HCT116 (cell line): ENCODE measurements at regions of chr2 and their contacts with region 1.

Region 1: DNA sequence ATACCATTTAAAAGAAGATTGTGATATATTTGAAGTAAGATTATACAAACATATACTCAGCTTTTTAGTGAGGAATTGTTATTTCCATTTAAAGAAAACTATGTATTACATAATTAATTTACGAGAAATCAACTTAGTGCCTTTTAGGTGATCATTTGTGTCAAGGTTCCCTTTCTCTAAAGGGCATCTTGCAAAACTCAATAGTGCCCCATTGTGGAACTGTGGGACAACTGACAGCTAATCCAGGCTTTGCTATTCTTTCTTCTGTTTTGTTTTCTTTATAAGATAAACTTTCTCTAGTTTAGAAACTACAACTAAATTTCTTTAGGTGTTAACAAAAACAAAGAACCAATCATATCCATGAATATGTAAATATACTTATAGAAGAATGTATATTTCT is 24.3 kb upstream of the VIT start:
- DNase-seq: peak; percentile 32
- ATAC-seq: peak; percentile 74
- H3K4me3 ChIP-seq: no peak overlapping the region
- H3K27ac ChIP-seq: no peak overlapping the region
- H3K4me1 ChIP-seq: no peaks in the 10 kb centered on the region
- H3K27me3 ChIP-seq: no peaks in the 10 kb centered on the region
- CTCF ChIP-seq: peak; percentile 41 to 68 (median 65); a peak in 4 of 6 replicates
- POLR2A ChIP-seq: no peak
- RAD21 ChIP-seq: peak; percentile 72

Region 2: GRCh38 chr2:35891936-35892335 is 780.3 kb before region 1 on chr2:
- CTCF ChIA-PET with region 1: no interaction called
- POLR2A ChIA-PET with region 1: no interaction called
- RAD21 ChIA-PET with region 1: no interaction called
- intact Hi-C with region 1: loop called (anchors 10 kb)
- DNase-seq: no peak
- ATAC-seq: no peak
- H3K4me3 ChIP-seq: no peak overlapping the region
- H3K27ac ChIP-seq: no peak overlapping the region
- H3K4me1 ChIP-seq: no peaks in the 10 kb centered on the region
- H3K27me3 ChIP-seq: no peaks in the 10 kb centered on the region
- CTCF ChIP-seq: no peak
- POLR2A ChIP-seq: no peak
- RAD21 ChIP-seq: no peak

Region 3: DNA sequence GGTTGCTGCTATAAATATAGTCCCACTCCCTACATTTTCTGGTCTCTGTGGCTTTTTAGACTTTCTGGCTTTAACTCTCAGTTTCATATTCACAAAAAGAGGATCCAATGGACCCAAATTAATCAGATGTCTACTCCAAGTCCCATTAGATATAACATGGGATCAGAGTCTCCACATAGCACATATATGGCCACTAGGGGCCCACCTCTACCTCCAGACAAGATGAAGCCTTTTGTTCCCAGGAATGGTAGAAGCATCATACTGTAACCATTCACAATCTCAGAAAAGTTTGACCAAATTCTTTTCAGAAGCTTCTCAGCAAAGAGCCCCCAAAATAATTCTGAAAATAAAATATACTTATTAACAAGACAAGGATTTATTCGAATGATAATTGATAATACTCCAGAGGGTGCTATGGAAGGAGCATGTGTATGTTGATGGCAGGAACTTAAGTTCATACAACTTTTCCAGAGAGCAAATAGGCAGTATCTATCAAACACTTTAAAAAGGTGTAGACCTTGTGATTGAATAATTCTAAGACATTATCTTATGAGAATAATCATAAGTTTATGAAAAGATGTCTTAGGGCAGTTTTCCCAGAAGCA is 699.0 kb before region 1 on chr2:
- CTCF ChIA-PET with region 1: no interaction called
- POLR2A ChIA-PET with region 1: no interaction called
- RAD21 ChIA-PET with region 1: no interaction called
- intact Hi-C with region 1: loop called (anchors 10 kb)
- DNase-seq: no peak
- ATAC-seq: peak; percentile 81
- H3K4me3 ChIP-seq: no peak overlapping the region
- H3K27ac ChIP-seq: no peak overlapping the region
- H3K4me1 ChIP-seq: no peaks in the 10 kb centered on the region
- H3K27me3 ChIP-seq: no peaks in the 10 kb centered on the region
- CTCF ChIP-seq: peak; percentile 28 to 70 (median 69); a peak in 5 of 6 replicates
- POLR2A ChIP-seq: no peak
- RAD21 ChIP-seq: peak; percentile 58

Region 4: GRCh38 chr2:36461039-36461681 is 211.0 kb before region 1 on chr2:
- CTCF ChIA-PET with region 1: interaction called, 3 read pairs
- POLR2A ChIA-PET with region 1: no interaction called
- RAD21 ChIA-PET with region 1: no interaction called
- intact Hi-C with region 1: loop called (anchors 5 kb)
- DNase-seq: peak; percentile 60
- ATAC-seq: peak; percentile 65
- H3K4me3 ChIP-seq: peak overlapping the region in 1 of 2 experiments; percentile 25; a peak in 2 of 4 replicates
- H3K27ac ChIP-seq: peak overlapping the region; percentile 45
- H3K4me1 ChIP-seq: peaks cover 25 to 35% of the 10 kb centered on the region in 2 experiments
- H3K27me3 ChIP-seq: no peaks in the 10 kb centered on the region
- CTCF ChIP-seq: no peak
- POLR2A ChIP-seq: no peak
- RAD21 ChIP-seq: peak; percentile 7; the same call in 1 of the 2 replicates

Region 5: DNA sequence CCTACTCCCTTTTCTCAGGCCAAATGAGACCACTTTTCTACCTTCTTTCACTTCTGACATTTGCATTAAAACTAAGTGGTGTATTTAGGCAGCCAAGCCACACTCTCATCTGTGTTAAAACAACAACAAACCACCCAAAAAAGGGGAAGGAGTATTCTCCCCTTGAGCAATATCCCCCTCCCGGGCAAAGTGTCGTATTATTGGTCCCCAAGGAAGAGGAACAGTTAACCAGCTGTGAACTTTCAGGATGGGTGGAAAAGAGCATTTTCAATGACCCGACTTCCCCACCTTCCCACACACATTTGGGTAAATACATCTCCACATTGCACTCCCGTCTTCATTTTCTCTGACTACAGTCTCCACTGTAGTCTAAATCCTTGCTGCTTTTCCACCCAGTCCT is 118.5 kb before region 1 on chr2:
- CTCF ChIA-PET with region 1: no interaction called
- POLR2A ChIA-PET with region 1: no interaction called
- RAD21 ChIA-PET with region 1: no interaction called
- intact Hi-C with region 1: loop called (anchors 5 kb)
- DNase-seq: no peak
- ATAC-seq: no peak
- H3K4me3 ChIP-seq: no peak overlapping the region
- H3K27ac ChIP-seq: no peak overlapping the region
- H3K4me1 ChIP-seq: no peaks in the 10 kb centered on the region
- H3K27me3 ChIP-seq: no peaks in the 10 kb centered on the region
- CTCF ChIP-seq: no peak
- POLR2A ChIP-seq: no peak
- RAD21 ChIP-seq: no peak

Region 6: GRCh38 chr2:36634971-36635597 is 37.1 kb before region 1 on chr2:
- CTCF ChIA-PET with region 1: no interaction called
- POLR2A ChIA-PET with region 1: no interaction called
- RAD21 ChIA-PET with region 1: no interaction called
- intact Hi-C with region 1: no loop called
- DNase-seq: no peak
- ATAC-seq: no peak
- H3K4me3 ChIP-seq: no peak overlapping the region
- H3K27ac ChIP-seq: no peak overlapping the region
- H3K4me1 ChIP-seq: no peaks in the 10 kb centered on the region; a peak in 1 of 4 replicates
- H3K27me3 ChIP-seq: no peaks in the 10 kb centered on the region
- CTCF ChIP-seq: no peak
- POLR2A ChIP-seq: no peak
- RAD21 ChIP-seq: no peak